Activated naive CD4-positive, alpha-beta T cell treated with anti-CD3 and anti-CD28 coated beads for 36 hours (primary cell): ENCODE measurements at regions of chr6 and their contacts with region 1.

Region 1: DNA sequence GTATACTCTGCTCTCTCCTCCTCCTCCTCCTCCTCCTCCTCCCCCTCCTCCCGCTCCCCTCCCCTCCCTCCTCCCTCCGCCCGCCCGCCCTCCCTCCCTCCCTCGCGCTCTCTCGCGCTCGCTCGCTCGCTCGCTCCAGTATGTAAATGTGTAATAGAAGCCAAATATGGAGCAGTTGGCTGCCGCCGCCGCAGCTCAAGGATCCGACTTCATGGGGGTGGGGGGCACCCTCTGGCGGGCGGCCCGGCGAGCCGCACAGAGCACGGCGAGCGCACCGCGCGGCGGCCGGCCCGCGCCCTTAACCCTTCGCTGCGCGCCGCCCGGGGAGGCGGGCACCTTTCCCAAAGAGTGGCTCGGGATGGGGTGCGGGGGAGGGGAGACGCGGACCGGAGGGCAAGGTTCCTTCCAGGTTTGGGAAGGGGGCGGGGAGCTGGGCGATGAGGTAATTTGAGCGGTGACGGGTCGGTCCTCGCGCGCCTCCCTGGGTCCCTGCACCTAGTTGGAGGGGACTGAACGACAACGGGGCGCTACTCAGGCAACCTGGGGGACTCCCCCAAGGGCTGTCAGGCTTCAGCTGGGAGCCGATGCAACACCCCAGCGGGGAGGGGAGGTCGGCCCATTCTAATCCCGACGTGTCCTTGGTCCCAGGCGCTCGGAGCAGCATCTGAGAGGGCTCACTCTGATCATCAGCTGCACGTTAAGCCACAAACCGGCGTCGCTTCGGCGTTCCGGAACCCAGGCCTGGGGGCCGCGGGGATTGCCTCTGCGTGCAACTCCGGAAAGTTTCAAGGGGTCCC is 409 bp upstream of the ATXN1 start:
- DNase-seq: peak; percentile 89
- H3K4me3 Mint-ChIP-seq: peak overlapping the region; percentile 98
- H3K27ac Mint-ChIP-seq: peak overlapping the region; percentile 92
- H3K4me1 Mint-ChIP-seq: peaks cover 59% of the 10 kb centered on the region
- H3K27me3 Mint-ChIP-seq: no peaks in the 10 kb centered on the region

Region 2: GRCh38 chr6:16238057-16238962 is 523.4 kb before region 1 on chr6 and contains the start of gene GMPR:
- CTCF ChIA-PET with region 1: no interaction called
- intact Hi-C with region 1: loop called (anchors 2 kb)
- DNase-seq: peak; percentile 74
- H3K4me3 Mint-ChIP-seq: peak within 1 kb of the TSS; percentile 76
- H3K27ac Mint-ChIP-seq: no peak within 1 kb of the TSS
- H3K4me1 Mint-ChIP-seq: peaks cover 18% of the 10 kb centered on the region
- H3K27me3 Mint-ChIP-seq: peaks cover 39% of the 10 kb centered on the region
- total RNA-seq, gene GMPR: 0.94 to 1.0 TPM

Region 3: DNA sequence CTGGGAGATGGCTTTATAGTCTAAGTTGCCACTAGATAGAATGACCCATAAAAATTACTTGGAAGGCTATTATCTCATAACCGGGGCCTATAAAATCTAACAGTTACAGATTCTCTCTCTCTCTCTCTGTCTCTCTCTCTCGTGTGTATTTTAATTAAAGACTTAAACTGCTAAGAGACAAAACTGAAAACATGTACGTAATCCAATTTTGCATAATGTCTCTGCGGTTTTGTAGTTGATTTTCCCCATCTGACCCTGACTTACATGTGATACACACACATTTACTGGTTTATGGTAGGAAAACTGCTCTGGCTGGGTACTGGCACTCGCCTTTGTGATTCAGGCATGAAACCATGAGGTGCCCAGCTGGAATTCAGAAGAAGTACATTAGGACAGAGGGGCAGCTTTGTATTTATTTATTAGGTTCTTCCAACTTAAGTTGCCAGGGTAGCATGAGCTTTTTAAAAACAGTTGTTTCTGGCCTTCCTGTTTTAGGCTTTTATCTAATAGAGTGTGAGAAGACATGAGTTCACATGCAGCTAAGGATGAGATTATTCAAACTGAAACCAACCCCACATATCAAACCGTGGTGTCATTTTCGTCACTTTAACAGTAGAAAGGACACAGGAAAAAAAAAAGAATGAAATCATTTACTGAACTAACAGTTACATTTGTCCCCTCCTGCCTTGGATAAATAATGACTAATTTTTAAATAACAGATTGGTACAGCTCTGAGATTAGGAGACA is 340.8 kb before region 1 on chr6:
- CTCF ChIA-PET with region 1: interaction called, 3 read pairs
- intact Hi-C with region 1: loop called (anchors 2 kb)
- DNase-seq: peak; percentile 66
- H3K4me3 Mint-ChIP-seq: peak overlapping the region; percentile 45
- H3K27ac Mint-ChIP-seq: peak overlapping the region; percentile 95
- H3K4me1 Mint-ChIP-seq: peaks cover 42% of the 10 kb centered on the region
- H3K27me3 Mint-ChIP-seq: no peaks in the 10 kb centered on the region

Region 4: GRCh38 chr6:16533721-16534136 is 227.9 kb before region 1 on chr6:
- CTCF ChIA-PET with region 1: no interaction called
- intact Hi-C with region 1: loop called (anchors 1 kb)
- DNase-seq: peak; percentile 22
- H3K4me3 Mint-ChIP-seq: no peak overlapping the region
- H3K27ac Mint-ChIP-seq: no peak overlapping the region
- H3K4me1 Mint-ChIP-seq: peaks cover 21% of the 10 kb centered on the region
- H3K27me3 Mint-ChIP-seq: no peaks in the 10 kb centered on the region

Region 5: DNA sequence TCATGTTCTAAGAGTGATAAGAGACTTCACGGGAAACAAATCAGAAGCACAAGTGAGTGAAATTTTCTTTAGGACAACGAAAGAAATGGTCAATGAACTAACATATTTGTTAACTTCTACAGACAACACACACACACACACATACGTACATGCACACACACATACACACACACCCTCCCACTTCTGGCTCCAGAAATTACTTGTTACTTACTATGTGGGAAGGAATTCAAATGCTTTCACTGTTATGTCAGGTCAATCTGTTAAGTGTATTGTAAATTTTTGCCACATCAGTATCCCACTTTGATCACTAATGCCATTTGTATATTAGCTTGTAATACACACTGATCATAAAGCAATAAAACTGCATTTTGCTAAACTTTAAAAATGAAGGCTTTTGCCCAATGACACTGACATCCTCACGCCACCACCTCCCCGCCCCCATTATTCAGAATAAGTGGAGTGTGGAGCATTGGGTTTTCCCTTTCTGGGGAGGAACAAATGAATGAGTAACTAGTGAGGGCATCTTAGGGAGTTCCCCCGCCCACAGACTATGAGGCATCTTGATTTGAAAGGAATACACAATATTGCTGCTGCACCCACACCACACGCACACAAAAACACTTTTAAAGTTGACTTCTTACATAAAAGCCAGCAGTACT is 76.6 kb before region 1 on chr6:
- CTCF ChIA-PET with region 1: interaction called, 3 read pairs
- intact Hi-C with region 1: loop called (anchors 1 kb)
- DNase-seq: peak; percentile 97
- H3K4me3 Mint-ChIP-seq: peak overlapping the region; percentile 20
- H3K27ac Mint-ChIP-seq: peak overlapping the region; percentile 44
- H3K4me1 Mint-ChIP-seq: peaks cover 74% of the 10 kb centered on the region
- H3K27me3 Mint-ChIP-seq: no peaks in the 10 kb centered on the region

Region 6: DNA sequence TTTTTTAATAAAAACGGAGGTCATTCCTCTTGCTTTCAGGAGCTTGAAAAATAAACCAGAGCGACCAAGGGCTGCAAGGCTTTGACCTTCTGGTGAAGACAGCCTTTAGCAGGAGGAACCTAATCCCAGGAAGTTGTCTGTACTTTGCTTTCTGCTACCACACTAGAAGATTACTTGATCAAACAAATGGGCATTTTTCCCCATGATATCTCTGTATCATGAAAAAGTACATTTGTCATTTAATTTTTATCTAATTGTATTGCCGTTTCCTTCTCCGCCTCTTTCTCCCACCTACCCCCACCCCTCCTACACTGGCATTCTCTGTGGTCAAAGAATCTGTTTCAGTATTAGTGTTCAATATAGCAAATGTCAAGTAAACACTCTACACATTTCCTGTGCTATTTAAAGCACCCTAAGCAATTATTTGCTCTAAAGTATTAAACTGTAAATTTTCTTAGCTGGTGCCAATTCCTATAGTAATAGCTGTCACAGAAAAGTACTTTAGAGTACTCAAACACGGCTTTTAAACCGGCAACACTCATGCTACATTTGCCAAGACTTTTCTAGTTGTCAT is 30.1 kb before region 1 on chr6:
- CTCF ChIA-PET with region 1: interaction called, 4 read pairs
- intact Hi-C with region 1: loop called (anchors 2 kb)
- DNase-seq: peak; percentile 40
- H3K4me3 Mint-ChIP-seq: no peak overlapping the region
- H3K27ac Mint-ChIP-seq: no peak overlapping the region
- H3K4me1 Mint-ChIP-seq: peaks cover 35% of the 10 kb centered on the region
- H3K27me3 Mint-ChIP-seq: no peaks in the 10 kb centered on the region

Region 7: DNA sequence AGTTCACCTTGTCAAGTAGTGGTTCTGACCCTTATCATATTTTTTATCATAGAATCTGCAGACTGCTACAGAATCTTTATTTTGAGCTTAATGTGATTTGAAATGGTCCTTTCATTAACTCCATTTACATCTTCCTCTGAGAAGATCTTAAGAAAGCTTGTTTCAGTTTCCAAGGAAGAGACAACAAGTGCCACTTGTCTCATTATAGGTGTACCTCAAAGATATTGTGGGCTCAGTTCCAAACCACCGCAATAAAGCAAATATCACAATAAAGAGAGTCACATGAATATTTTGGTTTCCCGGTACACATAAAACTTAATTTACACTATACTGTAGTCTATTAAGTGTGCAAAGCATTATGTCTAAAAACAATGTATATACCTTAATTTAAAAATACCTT is 66.0 kb after region 1 on chr6:
- CTCF ChIA-PET with region 1: no interaction called
- intact Hi-C with region 1: no loop called
- DNase-seq: no peak
- H3K4me3 Mint-ChIP-seq: no peak overlapping the region
- H3K27ac Mint-ChIP-seq: no peak overlapping the region
- H3K4me1 Mint-ChIP-seq: peaks cover 2% of the 10 kb centered on the region
- H3K27me3 Mint-ChIP-seq: peaks cover 16% of the 10 kb centered on the region

Region 8: GRCh38 chr6:17706580-17707370 is 945.1 kb after region 1 on chr6 and contains the start of gene NUP153:
- CTCF ChIA-PET with region 1: no interaction called
- intact Hi-C with region 1: loop called (anchors 2 kb)
- DNase-seq: peak; percentile 100
- H3K4me3 Mint-ChIP-seq: peak within 1 kb of the TSS; percentile 93
- H3K27ac Mint-ChIP-seq: peak within 1 kb of the TSS; percentile 99
- H3K4me1 Mint-ChIP-seq: peaks cover 28% of the 10 kb centered on the region
- H3K27me3 Mint-ChIP-seq: no peaks in the 10 kb centered on the region
- total RNA-seq, gene NUP153: 65.3 to 67.2 TPM